ENCODE measurements at regions of chr1 and their contacts with region 1.

Region 1: GRCh38 chr1:45499415-45499769 is 481 bp downstream of the CCDC163 start:
- DNase-seq: no peak
- ATAC-seq: peak in 1 of 2 experiments; percentile 16; a peak in 2 of 6 replicates
- H3K4me3 ChIP-seq: peak overlapping the region; percentile 75
- H3K27ac ChIP-seq: peak overlapping the region; percentile 82 to 83
- H3K4me1 ChIP-seq: peaks cover 25% of the 10 kb centered on the region
- CTCF ChIP-seq: no peak
- EP300 ChIP-seq: no peak
- POLR2A ChIP-seq: no peak
- RAD21 ChIP-seq: no peak

Region 2: DNA sequence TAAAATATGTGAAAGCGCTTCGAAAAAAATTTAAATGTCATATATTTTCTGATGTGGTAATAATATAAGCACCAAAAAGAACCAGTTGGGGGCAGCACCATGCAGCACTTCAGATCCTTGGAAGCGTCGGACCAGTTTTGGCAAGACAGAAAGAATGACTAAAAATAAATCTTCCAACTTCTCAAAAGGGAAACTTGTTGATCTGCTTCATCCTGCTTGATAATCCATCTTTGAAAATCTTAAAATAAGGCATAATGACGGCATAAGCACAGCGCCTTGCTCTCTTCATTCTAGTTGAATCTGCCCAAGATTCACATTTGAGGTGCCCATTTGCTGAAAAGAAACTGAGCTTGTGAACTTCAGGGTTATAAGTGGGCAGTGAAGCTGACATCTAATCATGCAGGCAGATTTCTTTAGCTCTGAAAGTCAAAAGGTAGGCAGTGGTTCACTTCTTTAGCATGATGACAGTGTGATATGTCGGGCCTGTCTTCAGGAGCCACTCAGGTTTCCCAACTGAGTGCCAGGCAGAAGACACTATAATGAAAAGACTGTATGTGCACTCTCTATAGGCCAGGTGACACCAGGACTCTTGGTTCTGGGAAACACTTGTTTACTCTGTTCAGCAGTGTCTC is 139.4 kb before region 1 on chr1:
- CTCF ChIA-PET with region 1: interaction called, 157 read pairs
- POLR2A ChIA-PET with region 1: no interaction called
- DNase-seq: peak in 1 of 2 experiments; percentile 48
- ATAC-seq: peak; percentile 66 to 75; a peak in 4 of 6 replicates
- H3K4me3 ChIP-seq: no peak overlapping the region
- H3K27ac ChIP-seq: no peak overlapping the region
- H3K4me1 ChIP-seq: no peaks in the 10 kb centered on the region
- CTCF ChIP-seq: peak; percentile 77
- EP300 ChIP-seq: no peak
- POLR2A ChIP-seq: no peak
- RAD21 ChIP-seq: peak; percentile 80

Region 3: DNA sequence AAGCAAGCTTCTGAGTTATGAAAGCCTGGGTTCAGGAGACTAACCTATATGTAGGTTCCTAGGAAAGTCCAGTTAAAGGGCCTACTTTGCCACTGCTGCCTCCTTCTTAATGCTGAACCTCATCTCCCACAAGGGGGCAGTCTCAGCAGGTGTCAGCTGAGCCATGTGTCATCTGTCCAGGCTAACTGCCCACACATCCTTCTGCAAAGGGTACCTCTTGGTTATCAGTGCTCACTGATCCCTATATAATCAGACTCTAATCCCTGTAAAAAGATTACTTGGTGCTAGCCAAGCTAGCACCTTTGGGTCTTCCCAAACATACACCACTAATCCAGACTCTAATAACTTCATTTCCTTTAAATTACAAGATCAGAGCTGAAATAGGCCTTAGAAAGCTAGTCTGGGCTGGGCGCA is 13.3 kb after region 1 on chr1:
- CTCF ChIA-PET with region 1: interaction called, 13 read pairs
- POLR2A ChIA-PET with region 1: interaction called, 7 read pairs
- DNase-seq: peak in 1 of 2 experiments; percentile 74
- ATAC-seq: peak; percentile 31 to 50; a peak in 3 of 6 replicates
- H3K4me3 ChIP-seq: no peak overlapping the region
- H3K27ac ChIP-seq: no peak overlapping the region
- H3K4me1 ChIP-seq: peaks cover 64% of the 10 kb centered on the region
- CTCF ChIP-seq: peak; percentile 47
- EP300 ChIP-seq: no peak
- POLR2A ChIP-seq: no peak
- RAD21 ChIP-seq: peak; percentile 37 to 46; a peak in 3 of 5 replicates

Region 4: DNA sequence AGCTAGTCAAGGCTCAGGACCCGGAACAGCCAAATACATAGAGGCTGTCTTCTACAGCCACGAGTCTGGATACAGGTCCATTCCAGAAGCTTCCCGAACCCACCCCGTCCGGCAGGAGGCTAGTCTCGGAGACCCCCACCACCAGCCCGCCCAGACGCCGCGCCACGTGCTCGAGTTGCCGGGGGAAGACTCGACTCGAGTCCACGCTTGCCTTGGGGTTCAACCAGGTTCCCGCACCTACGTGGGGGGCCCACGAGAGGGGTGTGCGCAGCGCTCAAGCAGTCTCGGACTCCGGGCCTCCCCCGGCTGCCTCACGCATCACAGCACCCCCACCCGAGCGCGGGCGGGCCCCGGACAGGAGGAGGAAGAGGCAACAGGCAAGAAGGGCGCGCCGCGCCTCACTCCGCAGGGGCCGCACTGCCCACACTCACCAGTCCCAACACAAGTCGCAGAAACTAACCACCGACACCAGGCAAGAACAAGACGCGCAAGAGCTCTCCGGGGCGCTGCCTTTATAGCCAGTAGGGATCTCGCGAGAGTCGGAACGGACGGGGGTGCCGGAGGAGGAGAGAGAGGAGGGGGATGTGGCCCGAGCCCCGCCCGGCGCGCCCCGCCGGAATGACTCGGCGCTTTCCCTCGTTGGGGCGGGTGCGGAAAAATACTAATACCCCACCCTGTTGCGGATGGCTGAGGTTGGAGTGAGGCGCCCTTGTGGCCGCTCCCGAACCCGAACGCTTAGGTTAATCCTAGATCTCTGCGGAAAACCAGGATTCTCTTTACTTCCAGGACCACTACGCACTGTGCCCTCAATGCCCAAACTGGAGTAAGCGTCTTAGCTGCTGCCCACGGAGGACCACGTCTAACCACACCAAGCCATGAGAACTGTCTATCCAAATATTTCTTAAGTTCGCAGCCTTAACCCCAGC is 22.3 kb after region 1 on chr1 and contains the start of gene PRDX1:
- CTCF ChIA-PET with region 1: no interaction called
- POLR2A ChIA-PET with region 1: interaction called, 21 read pairs
- DNase-seq: peak; percentile 72 to 95
- ATAC-seq: peak; percentile 84 to 86
- H3K4me3 ChIP-seq: peak within 1 kb of the TSS; percentile 76
- H3K27ac ChIP-seq: peak within 1 kb of the TSS; percentile 100
- H3K4me1 ChIP-seq: peaks cover 62% of the 10 kb centered on the region
- CTCF ChIP-seq: no peak
- EP300 ChIP-seq: 0 out of 5 replicates have a peak, but pooled peaks of 1 of the 2 experiments have one; percentile 17
- POLR2A ChIP-seq: peak; percentile 99
- RAD21 ChIP-seq: no peak
- polyA plus RNA-seq, gene PRDX1: 2,329 and 2,391 TPM in 2 replicates

Measured in A549 (cell line).